T-cell (primary cell): ENCODE measurements at regions of chrX and their contacts with region 1.

Region 1: DNA sequence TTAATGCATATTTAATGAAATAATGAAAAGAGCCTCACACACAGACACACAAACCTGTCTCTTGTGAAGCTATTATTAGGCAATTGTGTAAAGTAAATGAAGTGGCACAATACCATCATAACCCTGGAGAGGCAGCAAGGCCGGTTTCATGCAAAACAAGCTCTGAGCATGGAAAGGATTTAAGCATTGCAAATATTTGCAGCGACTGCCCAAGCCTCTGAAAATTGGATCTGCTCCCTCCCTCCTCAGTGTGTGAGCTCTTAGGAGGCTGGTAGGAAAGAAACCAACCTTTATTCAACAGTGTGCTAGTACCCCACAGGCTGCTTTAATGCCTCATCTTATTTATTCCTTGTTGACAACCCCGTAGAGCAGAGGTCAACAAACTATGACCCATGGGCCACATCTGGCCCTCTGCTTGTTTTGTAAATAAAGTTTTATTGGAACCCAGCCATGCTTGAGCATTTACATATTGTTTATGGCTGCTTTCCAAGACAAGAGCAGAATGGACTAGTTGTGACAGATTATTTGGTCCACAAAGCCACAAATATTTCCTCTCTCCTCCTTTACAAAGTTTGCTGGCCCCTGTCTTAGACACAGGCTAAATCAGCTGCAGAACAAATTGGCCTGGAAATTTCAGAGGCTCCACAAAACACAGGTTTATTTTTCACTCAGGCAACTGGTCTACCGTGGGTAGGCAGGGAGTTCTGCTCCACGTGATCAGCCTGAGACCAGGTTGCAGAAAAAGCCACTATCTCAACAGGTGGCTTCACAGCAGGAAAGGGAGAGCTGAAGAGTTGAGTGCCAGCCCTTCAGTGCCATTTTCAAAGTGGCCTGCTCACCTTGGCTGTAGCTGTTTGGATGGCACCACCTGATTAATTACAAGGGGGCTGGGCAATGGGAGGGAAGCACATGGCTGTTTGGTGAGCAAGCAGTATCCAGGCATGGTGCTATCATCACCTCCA is 16.8 kb downstream of the RS1 start:
- DNase-seq: no peak
- ATAC-seq: no peak
- H3K4me3 ChIP-seq: no peak overlapping the region
- H3K4me3 Mint-ChIP-seq: no peak overlapping the region
- H3K27ac ChIP-seq: no peak overlapping the region
- H3K27ac Mint-ChIP-seq: no peak overlapping the region
- H3K4me1 ChIP-seq: no peaks in the 10 kb centered on the region
- H3K4me1 Mint-ChIP-seq: no peaks in the 10 kb centered on the region
- H3K27me3 ChIP-seq: no peaks in the 10 kb centered on the region
- H3K27me3 Mint-ChIP-seq: no peaks in the 10 kb centered on the region

Region 2: DNA sequence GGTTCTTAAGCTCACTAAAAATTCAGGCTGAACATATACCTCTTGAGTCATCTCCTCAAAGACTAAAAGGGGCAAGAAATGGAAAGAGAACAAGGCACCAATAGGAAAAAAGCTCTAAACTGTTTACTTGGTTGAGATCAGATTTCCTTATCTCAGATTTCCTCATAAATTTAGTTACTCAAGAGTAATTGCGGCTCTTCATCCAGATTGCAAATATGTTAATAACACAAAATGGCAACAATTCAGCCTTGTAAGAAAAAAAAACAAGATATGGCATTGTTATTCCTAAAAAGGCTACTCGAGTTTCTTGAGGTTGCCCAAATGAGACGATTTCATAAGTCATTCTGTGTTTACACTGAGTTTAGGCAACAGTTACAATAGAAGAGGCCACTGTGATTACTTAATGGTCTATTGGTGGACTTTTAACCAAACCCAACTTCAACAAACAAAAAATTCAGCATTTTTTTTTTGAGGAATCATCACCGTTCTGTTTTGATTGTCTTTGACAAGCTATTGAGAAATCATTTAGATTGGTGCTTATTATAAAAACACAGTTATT is 590.6 kb after region 1 on chrX:
- CTCF ChIA-PET with region 1: no interaction called
- POLR2A ChIA-PET with region 1: no interaction called
- DNase-seq: no peak
- ATAC-seq: no peak
- H3K4me3 ChIP-seq: no peak overlapping the region
- H3K4me3 Mint-ChIP-seq: no peak overlapping the region
- H3K27ac ChIP-seq: no peak overlapping the region
- H3K27ac Mint-ChIP-seq: no peak overlapping the region
- H3K4me1 ChIP-seq: no peaks in the 10 kb centered on the region
- H3K4me1 Mint-ChIP-seq: no peaks in the 10 kb centered on the region
- H3K27me3 ChIP-seq: no peaks in the 10 kb centered on the region
- H3K27me3 Mint-ChIP-seq: peaks cover 0 to 8% of the 10 kb centered on the region in 2 donors

Region 3: DNA sequence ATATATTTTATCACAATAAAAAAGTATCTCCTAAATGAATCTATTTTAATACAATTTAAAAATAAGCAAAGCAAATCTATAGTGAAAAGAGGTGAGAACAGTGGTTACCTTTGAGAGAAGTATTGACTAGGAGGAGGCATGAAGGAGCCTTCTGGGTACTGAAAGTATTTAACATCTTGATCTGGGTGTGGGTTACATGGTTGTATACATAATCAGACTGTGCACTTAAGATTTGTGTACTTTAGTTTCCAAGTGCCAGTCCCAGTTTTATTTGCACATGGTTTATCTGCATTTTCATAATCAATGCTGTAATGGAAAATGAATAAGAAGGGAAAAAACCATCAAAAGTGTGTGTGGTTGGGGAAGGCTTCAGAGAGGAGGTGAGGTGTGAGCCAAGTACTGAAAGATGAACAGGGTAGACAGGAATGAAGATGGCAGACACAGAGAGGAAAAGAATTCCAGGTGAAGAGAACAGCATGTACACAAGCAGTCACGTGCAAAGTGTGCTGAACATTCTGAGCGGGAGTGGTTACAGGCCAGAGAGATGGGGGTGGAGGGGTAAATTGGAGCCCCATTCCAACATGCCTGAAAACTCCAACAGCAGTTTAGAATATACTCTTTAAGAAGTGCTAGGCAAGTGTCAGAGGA is 1446.9 kb after region 1 on chrX:
- CTCF ChIA-PET with region 1: interaction called in 1 of 2 experiments, 13 read pairs
- POLR2A ChIA-PET with region 1: no interaction called
- DNase-seq: no peak
- ATAC-seq: no peak
- H3K4me3 ChIP-seq: no peak overlapping the region
- H3K4me3 Mint-ChIP-seq: no peak overlapping the region
- H3K27ac ChIP-seq: no peak overlapping the region
- H3K27ac Mint-ChIP-seq: no peak overlapping the region
- H3K4me1 ChIP-seq: no peaks in the 10 kb centered on the region
- H3K4me1 Mint-ChIP-seq: no peaks in the 10 kb centered on the region
- H3K27me3 ChIP-seq: no peaks in the 10 kb centered on the region
- H3K27me3 Mint-ChIP-seq: no peaks in the 10 kb centered on the region